ENCODE measurements at regions of chr7 and their contacts with region 1.

Region 1: DNA sequence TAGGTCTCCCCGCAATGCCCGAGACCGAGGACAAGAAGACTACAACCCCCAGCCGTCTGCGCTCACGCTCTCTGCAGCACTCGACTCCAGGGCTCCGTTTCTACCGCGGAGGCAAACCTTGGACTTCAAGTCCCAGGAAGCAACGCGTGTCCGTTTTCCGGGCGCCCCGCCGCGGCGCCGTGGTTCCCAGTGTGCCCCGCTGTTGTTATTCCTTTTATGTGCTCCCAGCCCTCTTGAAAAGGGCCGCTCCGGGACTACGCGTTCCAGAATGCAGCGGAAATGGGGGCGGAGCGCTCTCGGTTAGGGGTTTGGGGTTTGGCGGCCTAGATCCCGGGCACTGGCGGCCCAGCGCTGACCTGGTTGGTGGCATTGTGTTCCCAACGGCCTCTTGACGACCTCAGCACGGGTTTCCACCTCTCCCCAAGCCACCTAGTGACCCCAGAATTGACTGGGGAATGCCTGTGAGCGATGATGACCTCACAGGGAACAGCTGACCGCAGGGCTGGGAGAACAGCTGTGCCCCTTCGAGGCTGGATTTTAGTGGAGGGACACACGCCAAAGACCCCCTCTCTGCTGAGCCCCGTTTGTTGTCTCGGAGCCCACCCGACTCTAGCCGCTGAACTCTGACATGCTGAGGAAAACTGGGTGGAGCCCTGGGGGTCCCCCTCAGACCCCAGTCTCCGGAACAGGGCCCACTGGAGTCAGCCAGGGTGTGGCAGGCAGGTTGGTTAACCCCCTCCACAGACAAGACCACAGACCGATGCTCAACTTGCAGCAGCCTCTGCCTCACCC is 488 bp upstream of the CDK5 start:
- DNase-seq: peak; percentile 99
- H3K4me3 ChIP-seq: peak overlapping the region; percentile 66 to 99
- H3K27ac ChIP-seq: peak overlapping the region; percentile 95 to 99
- H3K4me1 ChIP-seq: peaks cover 28 to 52% of the 10 kb centered on the region in 2 experiments
- H3K27me3 ChIP-seq: no peaks in the 10 kb centered on the region
- CTCF ChIP-seq: no peak
- EP300 ChIP-seq: no peak
- RAD21 ChIP-seq: no peak

Region 2: GRCh38 chr7:151028131-151028947 is 29.8 kb before region 1 on chr7 and contains the start of gene ABCB8:
- CTCF ChIA-PET with region 1: interaction called, 14 read pairs
- POLR2A ChIA-PET with region 1: interaction called, 7 read pairs
- DNase-seq: peak; percentile 100
- H3K4me3 ChIP-seq: peak within 1 kb of the TSS; percentile 84 to 85
- H3K27ac ChIP-seq: peak within 1 kb of the TSS; percentile 69 to 90
- H3K4me1 ChIP-seq: peaks cover 7 to 10% of the 10 kb centered on the region in 2 experiments; a peak in 2 of 4 replicates
- H3K27me3 ChIP-seq: no peaks in the 10 kb centered on the region
- CTCF ChIP-seq: peak; percentile 59
- EP300 ChIP-seq: no peak
- RAD21 ChIP-seq: peak; percentile 83
- polyA plus RNA-seq, gene ABCB8: 36.0 and 38.3 TPM in 2 replicates

Region 3: DNA sequence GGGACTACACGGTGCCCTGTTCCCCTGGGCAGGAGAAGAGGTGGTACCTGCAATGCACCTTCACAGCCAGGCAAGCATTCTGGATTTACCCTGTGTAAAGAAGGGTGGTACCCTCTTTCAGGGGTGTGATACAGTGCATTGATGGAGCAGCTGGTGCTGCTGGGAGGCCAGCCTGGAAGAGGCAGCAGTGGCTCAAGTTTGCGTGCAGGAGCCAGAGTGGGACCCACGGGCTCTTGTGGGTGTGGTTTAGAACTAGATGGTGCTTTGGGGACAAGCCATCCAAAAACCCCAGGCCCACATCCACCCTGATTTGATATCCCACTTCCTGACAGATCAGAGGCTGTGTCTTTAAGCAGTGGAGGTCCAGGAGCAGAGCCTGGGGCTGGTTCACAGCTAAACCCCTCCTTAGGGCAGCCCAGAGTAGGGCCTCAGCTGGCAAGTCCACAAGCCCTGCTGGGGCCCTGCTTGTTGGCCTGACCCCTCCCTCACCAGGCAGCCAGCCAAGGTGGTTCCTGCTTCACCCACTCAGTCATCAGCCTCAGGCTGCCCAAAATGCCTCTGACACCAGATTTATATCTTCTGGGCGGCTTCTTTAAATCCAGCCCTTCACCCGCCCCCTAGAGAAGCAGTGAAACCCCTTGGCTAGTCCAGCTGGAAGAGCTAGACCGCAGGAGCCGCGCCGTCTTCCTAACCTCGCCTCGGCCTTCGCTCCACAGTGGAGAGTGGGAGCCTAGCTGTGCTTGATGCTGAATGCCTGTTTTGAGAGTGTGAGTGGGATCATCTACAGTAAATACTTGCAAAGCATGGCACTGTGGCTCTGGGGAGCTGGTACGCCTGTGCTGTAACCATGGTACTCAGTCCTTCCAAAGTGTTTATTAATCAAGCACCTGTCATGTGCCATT is 11.3 kb before region 1 on chr7:
- CTCF ChIA-PET with region 1: interaction called, 7 read pairs
- POLR2A ChIA-PET with region 1: interaction called, 11 read pairs
- DNase-seq: peak; percentile 88
- H3K4me3 ChIP-seq: no peak overlapping the region
- H3K27ac ChIP-seq: peak overlapping the region; percentile 61 to 78
- H3K4me1 ChIP-seq: peaks cover 13 to 39% of the 10 kb centered on the region in 2 experiments
- H3K27me3 ChIP-seq: no peaks in the 10 kb centered on the region
- CTCF ChIP-seq: no peak
- EP300 ChIP-seq: no peak; a peak in 1 of 4 replicates
- RAD21 ChIP-seq: no peak

Region 4: DNA sequence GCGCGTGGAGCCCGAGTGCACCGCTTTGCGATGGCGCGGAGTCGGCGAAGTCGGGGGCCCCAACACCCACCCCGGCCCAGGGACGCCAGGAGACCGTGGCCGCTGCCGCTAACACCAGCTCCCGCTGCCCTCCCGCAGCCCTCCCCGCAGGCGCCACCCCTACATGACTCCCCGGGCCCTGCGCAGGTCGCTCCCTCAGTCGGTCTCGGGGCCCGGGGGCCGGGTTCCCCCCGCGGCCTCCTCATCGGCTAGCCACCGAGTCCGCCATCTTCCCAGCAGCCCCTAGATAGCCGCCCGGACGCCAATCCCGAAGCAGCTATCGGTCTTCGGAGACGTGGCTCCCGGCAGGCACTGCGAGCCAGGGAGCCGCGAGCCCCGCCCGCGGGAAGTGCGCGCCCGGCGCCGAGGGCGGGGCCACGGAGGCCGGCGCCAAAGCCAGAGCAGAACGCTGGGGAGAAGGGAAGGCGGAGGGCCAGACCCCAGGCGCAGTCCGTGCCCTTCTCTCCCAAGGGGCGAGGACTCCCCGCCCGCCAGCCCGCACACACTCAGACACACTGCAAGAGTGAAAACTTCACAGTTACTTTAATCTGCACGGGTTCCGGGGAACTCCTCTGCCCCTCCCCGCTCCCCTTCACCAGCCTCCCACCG is 22.5 kb after region 1 on chr7 and contains the start of gene FASTK:
- CTCF ChIA-PET with region 1: interaction called, 77 read pairs
- POLR2A ChIA-PET with region 1: interaction called, 5 read pairs
- DNase-seq: peak; percentile 99
- H3K4me3 ChIP-seq: peak within 1 kb of the TSS; percentile 94 to 99
- H3K27ac ChIP-seq: peak within 1 kb of the TSS; percentile 78 to 95
- H3K4me1 ChIP-seq: peaks cover 30 to 48% of the 10 kb centered on the region in 2 experiments
- H3K27me3 ChIP-seq: no peaks in the 10 kb centered on the region
- CTCF ChIP-seq: no peak
- EP300 ChIP-seq: peak in 1 of 2 experiments; percentile 34; a peak in 1 of 4 replicates
- RAD21 ChIP-seq: no peak
- polyA plus RNA-seq, gene FASTK: 125 and 148 TPM in 2 replicates

Measured in SK-N-SH (cell line).